Activated T-helper 1 cell treated with anti-CD3 and anti-CD28 coated beads, Interleukin-12 subunit alpha, Interleukin-12 subunit beta, Interleukin-2, Interleukin-4 antibody, amounts not matched to agents 30 ng/mL and 10 ng/mL and 1 ng/mL, durations not matched to agents 14 hours and 24 hours and 36 hours (primary cell): ENCODE measurements at regions of chr16 and their contacts with region 1.

Region 1: GRCh38 chr16:80804056-80804450 is 345 bp downstream of the CDYL2 start:
- DNase-seq: peak; percentile 56
- H3K4me3 Mint-ChIP-seq: peak overlapping the region; percentile 95
- H3K27ac Mint-ChIP-seq: peak overlapping the region; percentile 98
- H3K4me1 Mint-ChIP-seq: peaks cover 57% of the 10 kb centered on the region
- H3K27me3 Mint-ChIP-seq: no peaks in the 10 kb centered on the region

Region 2: GRCh38 chr16:80265624-80266306 is 538.3 kb before region 1 on chr16:
- intact Hi-C with region 1: no loop called
- DNase-seq: no peak
- H3K4me3 Mint-ChIP-seq: no peak overlapping the region
- H3K27ac Mint-ChIP-seq: no peak overlapping the region
- H3K4me1 Mint-ChIP-seq: no peaks in the 10 kb centered on the region
- H3K27me3 Mint-ChIP-seq: no peaks in the 10 kb centered on the region

Region 3: GRCh38 chr16:80540516-80541272 is 263.4 kb before region 1 on chr16 and contains the start of gene DYNLRB2:
- intact Hi-C with region 1: loop called (anchors 1 kb)
- DNase-seq: peak; percentile 92
- H3K4me3 Mint-ChIP-seq: peak within 1 kb of the TSS; percentile 87
- H3K27ac Mint-ChIP-seq: peak within 1 kb of the TSS; percentile 96
- H3K4me1 Mint-ChIP-seq: peaks cover 38% of the 10 kb centered on the region
- H3K27me3 Mint-ChIP-seq: peaks cover 2% of the 10 kb centered on the region
- total RNA-seq, gene DYNLRB2: not detected in 2 replicates

Region 4: GRCh38 chr16:80656711-80657150 is 147.3 kb before region 1 on chr16:
- intact Hi-C with region 1: loop called (anchors 2 kb)
- DNase-seq: peak; percentile 42
- H3K4me3 Mint-ChIP-seq: peak overlapping the region; percentile 85
- H3K27ac Mint-ChIP-seq: peak overlapping the region; percentile 91
- H3K4me1 Mint-ChIP-seq: peaks cover 43% of the 10 kb centered on the region
- H3K27me3 Mint-ChIP-seq: no peaks in the 10 kb centered on the region

Region 5: GRCh38 chr16:80718249-80719220 is 85.5 kb before region 1 on chr16:
- intact Hi-C with region 1: no loop called
- DNase-seq: no peak
- H3K4me3 Mint-ChIP-seq: no peak overlapping the region
- H3K27ac Mint-ChIP-seq: no peak overlapping the region
- H3K4me1 Mint-ChIP-seq: peaks cover 23% of the 10 kb centered on the region
- H3K27me3 Mint-ChIP-seq: no peaks in the 10 kb centered on the region

Region 6: GRCh38 chr16:80744856-80745255 is 59.2 kb before region 1 on chr16:
- intact Hi-C with region 1: loop called (anchors 5 kb)
- DNase-seq: no peak
- H3K4me3 Mint-ChIP-seq: no peak overlapping the region
- H3K27ac Mint-ChIP-seq: no peak overlapping the region
- H3K4me1 Mint-ChIP-seq: peaks cover 57% of the 10 kb centered on the region
- H3K27me3 Mint-ChIP-seq: no peaks in the 10 kb centered on the region

Region 7: GRCh38 chr16:80948886-80949493 is 144.9 kb after region 1 on chr16:
- intact Hi-C with region 1: loop called (anchors 5 kb)
- DNase-seq: peak; percentile 17
- H3K4me3 Mint-ChIP-seq: no peak overlapping the region
- H3K27ac Mint-ChIP-seq: no peak overlapping the region
- H3K4me1 Mint-ChIP-seq: peaks cover 18% of the 10 kb centered on the region
- H3K27me3 Mint-ChIP-seq: peaks cover 6% of the 10 kb centered on the region